Caco-2 (cell line): ENCODE measurements at regions of chr9 and their contacts with region 1.

Region 1: DNA sequence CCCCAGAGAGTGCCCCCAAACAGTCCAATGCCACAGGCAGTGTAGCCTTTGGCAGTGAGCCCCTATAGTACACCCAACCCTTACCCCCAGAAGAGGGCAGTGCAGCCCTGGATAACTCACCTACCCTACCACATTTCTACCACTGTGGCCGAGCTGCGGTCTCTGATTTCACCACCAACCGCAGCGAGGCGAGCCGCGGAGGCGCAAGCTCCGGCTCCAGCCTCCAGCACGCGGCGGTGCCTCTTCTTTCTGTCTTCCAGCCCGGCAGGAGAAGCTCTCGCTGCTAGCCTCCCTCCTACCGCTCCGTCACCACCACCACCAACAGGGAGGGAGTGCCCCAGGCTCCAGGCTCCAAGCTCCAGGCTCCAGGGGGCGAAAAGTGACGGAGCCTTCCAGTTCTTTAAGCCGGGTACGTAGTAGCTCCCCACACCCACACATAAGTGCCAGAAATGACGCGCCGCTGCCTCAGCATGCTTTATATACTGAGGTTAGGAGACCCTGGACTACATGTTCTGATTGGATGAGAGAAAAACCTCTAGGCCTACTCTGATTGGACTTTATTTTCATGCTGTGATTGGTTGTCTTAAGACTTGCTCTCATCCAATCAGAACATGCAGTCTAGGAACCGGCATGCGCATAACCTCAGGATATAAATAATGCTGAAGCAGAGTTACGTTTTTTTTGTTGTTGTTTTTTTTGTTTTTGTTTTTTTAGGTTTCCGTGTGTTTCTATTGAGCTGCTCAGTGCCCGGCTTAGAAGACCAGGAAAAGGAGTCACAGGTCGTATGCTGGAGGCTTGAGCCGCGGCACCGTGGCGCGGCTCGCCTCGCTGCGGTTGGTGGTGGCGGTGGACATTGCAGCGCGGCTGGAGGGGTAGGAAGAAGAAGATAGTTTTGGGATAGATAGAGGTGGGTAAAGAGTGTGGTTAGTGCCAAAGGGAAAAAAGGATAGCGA is at the start of gene PCAT7:
- DNase-seq: peak; percentile 87 to 89
- H3K4me3 ChIP-seq: peak within 1 kb of the TSS; percentile 48
- H3K4me3 Mint-ChIP-seq: no peak within 1 kb of the TSS
- H3K27ac Mint-ChIP-seq: no peak within 1 kb of the TSS
- H3K4me1 ChIP-seq: 0 out of 2 replicates have a peak, but pooled peaks cover 3% of the 10 kb centered on the region
- H3K4me1 Mint-ChIP-seq: peaks cover 11% of the 10 kb centered on the region
- H3K27me3 ChIP-seq: no peaks in the 10 kb centered on the region
- H3K27me3 Mint-ChIP-seq: no peaks in the 10 kb centered on the region
- CTCF ChIP-seq: peak; percentile 67 to 78
- total RNA-seq, gene PCAT7: 10.4 and 10.6 TPM in 2 replicates

Region 2: DNA sequence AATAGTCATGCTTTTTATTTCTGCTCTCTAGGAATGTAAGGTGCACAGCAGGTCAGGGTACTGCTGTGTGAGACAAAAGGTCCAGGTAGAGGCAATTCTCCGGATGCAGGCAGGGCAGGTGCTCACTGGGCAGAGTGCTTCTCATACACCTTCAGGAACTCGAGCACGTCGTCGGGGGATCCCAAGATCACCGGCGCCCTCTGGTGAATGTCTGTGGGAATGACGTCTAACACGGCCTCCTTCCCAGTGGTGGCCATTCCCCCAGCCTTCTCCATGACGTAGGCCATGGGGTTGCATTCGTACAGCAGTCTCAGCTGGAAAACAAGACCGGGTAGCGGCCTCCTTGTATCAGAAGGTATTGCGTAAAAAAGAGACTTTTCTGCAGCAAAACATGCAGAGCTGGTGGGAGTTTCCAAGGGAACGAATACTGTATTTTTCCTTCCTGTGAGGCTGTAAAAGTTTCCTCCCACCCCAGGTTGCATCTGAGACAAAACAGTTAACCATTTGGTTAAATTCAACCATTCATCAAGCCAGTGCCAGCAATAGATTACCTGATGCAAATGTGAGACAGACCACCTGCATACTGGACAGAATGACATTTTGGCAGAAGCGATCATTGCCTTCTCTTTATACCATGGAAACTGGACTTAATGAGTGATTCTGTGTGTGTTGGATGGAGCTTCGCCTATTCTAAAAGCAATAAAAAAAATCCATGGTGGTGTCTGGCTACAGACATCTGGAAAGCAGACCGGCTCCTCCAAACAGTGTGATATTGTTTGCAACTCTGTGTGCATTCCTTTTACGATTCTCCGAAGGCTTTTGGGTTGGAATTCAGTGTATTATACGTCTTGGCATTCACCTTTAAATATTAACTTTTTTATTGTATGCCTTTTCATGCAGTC is 48.8 kb after region 1 on chr9:
- CTCF ChIA-PET with region 1: interaction called, 8 read pairs
- POLR2A ChIA-PET with region 1: interaction called, 10 read pairs
- intact Hi-C with region 1: loop called (anchors 1 kb)
- DNase-seq: peak; percentile 83 to 85
- H3K4me3 ChIP-seq: peak overlapping the region; percentile 16; the same call in 1 of the 2 replicates
- H3K4me3 Mint-ChIP-seq: peak overlapping the region; percentile 33
- H3K27ac Mint-ChIP-seq: peak overlapping the region; percentile 64
- H3K4me1 ChIP-seq: peaks cover 31% of the 10 kb centered on the region
- H3K4me1 Mint-ChIP-seq: peaks cover 35% of the 10 kb centered on the region
- H3K27me3 ChIP-seq: no peaks in the 10 kb centered on the region
- H3K27me3 Mint-ChIP-seq: no peaks in the 10 kb centered on the region
- CTCF ChIP-seq: peak; percentile 70 to 78

Region 3: GRCh38 chr9:94623253-94623652 is 68.5 kb after region 1 on chr9:
- CTCF ChIA-PET with region 1: interaction called, 16 read pairs
- POLR2A ChIA-PET with region 1: no interaction called
- intact Hi-C with region 1: loop called (anchors 1 kb)
- DNase-seq: peak; percentile 67 to 72
- H3K4me3 ChIP-seq: no peak overlapping the region
- H3K4me3 Mint-ChIP-seq: no peak overlapping the region
- H3K27ac Mint-ChIP-seq: no peak overlapping the region
- H3K4me1 ChIP-seq: no peaks in the 10 kb centered on the region; the same call in 1 of the 2 replicates
- H3K4me1 Mint-ChIP-seq: no peaks in the 10 kb centered on the region
- H3K27me3 ChIP-seq: no peaks in the 10 kb centered on the region
- H3K27me3 Mint-ChIP-seq: no peaks in the 10 kb centered on the region
- CTCF ChIP-seq: peak; percentile 52 to 71

Region 4: DNA sequence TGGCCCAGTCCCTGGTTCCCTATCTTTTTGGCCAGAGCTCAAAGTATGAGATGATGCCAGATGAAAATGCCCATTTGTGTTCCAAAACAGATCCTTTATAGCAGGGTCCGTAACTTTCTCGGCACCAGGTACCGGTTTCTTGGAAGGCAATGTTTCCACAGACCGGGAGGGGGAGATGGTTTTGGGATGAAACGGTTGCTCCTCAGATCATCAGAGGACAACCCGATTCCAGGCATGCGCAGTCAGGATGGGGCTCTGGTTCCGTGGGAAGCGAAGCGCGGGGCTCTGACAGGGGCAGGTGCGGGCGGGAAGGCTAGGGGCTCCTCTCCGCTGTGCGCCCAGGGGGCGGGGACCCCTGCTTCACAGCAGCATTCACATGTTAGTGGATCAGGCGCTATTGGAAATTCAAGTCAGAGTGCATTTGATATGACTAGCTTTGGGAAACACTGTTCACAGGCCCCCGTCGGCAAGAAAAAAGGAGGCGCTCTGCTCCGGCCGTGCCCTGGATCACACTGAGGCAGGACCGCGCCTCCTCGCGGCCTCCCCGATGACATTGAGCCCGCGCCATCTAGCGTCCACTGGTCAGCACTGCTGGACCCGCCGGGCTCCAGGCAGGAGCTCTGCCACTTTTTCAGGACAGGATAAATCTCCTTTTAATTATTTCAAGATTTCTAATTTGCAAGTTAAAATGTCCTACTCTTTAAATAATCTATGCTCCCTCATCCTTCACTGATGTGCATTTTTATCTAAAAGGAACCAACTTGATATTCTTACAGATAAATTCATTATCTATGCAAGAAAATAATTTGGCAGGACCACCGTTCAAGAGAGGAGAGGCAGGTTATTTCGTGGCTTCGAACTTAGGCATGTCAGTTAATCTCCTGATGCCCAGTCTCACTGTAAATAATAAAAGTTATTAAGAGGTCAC is 572.8 kb after region 1 on chr9:
- CTCF ChIA-PET with region 1: interaction called, 7 read pairs
- POLR2A ChIA-PET with region 1: no interaction called
- intact Hi-C with region 1: loop called (anchors 1 kb)
- DNase-seq: peak; percentile 67 to 77
- H3K4me3 ChIP-seq: no peak overlapping the region
- H3K4me3 Mint-ChIP-seq: no peak overlapping the region
- H3K27ac Mint-ChIP-seq: no peak overlapping the region
- H3K4me1 ChIP-seq: no peaks in the 10 kb centered on the region
- H3K4me1 Mint-ChIP-seq: peaks cover 13% of the 10 kb centered on the region
- H3K27me3 ChIP-seq: no peaks in the 10 kb centered on the region
- H3K27me3 Mint-ChIP-seq: no peaks in the 10 kb centered on the region
- CTCF ChIP-seq: peak; percentile 71 to 95

Region 5: DNA sequence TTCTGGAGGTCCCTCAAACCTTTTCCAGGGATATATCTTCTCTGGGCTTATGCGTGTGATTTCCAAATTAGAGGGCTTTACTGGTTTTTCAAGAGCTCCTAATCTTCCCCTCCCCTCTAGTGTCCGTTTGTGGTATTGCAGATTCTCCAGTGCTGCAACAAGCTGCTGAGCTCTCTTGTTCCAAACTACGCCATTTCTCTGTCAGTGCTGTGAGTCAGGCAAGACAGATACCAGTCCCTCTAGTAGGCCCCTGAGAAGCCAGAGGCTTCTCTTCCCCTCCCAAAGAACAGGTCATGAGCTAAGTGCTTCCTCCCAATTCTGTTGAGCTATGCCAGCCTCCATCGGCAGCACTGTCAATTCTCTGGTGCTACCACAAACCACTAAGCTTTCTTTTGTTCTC is 613.3 kb after region 1 on chr9:
- CTCF ChIA-PET with region 1: interaction called, 8 read pairs
- POLR2A ChIA-PET with region 1: no interaction called
- intact Hi-C with region 1: loop called (anchors 1 kb)
- DNase-seq: peak; percentile 69 to 83
- H3K4me3 ChIP-seq: no peak overlapping the region
- H3K4me3 Mint-ChIP-seq: no peak overlapping the region
- H3K27ac Mint-ChIP-seq: no peak overlapping the region
- H3K4me1 ChIP-seq: no peaks in the 10 kb centered on the region
- H3K4me1 Mint-ChIP-seq: no peaks in the 10 kb centered on the region
- H3K27me3 ChIP-seq: no peaks in the 10 kb centered on the region
- H3K27me3 Mint-ChIP-seq: no peaks in the 10 kb centered on the region
- CTCF ChIP-seq: peak; percentile 80 to 83